CD8-positive, alpha-beta memory T cell (primary cell): ENCODE measurements at regions of chr15 and their contacts with region 1.

Region 1: GRCh38 chr15:92077353-92078085 is 224.0 kb downstream of the SLCO3A1 start:
- DNase-seq: peak; percentile 21 to 67 (median 28)
- H3K4me3 ChIP-seq: no peak overlapping the region
- H3K4me3 Mint-ChIP-seq: no peak overlapping the region
- H3K27ac ChIP-seq: no peak overlapping the region
- H3K27ac Mint-ChIP-seq: peak overlapping the region in 2 of 8 donors; percentile 29 to 33
- H3K4me1 ChIP-seq: peaks cover 13% of the 10 kb centered on the region
- H3K4me1 Mint-ChIP-seq: peaks cover 32 to 49% (median 40%) of the 10 kb centered on the region in 3 donors
- H3K27me3 ChIP-seq: no peaks in the 10 kb centered on the region
- H3K27me3 Mint-ChIP-seq: no peaks in the 10 kb centered on the region

Region 2: GRCh38 chr15:92091155-92091734 is 13.7 kb after region 1 on chr15:
- CTCF ChIA-PET with region 1: interaction called, 14 read pairs
- POLR2A ChIA-PET with region 1: no interaction called
- DNase-seq: no peak
- H3K4me3 ChIP-seq: no peak overlapping the region
- H3K4me3 Mint-ChIP-seq: no peak overlapping the region
- H3K27ac ChIP-seq: no peak overlapping the region
- H3K27ac Mint-ChIP-seq: peak overlapping the region in 1 of 8 donors; percentile 11
- H3K4me1 ChIP-seq: peaks cover 17% of the 10 kb centered on the region
- H3K4me1 Mint-ChIP-seq: peaks cover 28 to 68% (median 44%) of the 10 kb centered on the region in 3 donors
- H3K27me3 ChIP-seq: no peaks in the 10 kb centered on the region
- H3K27me3 Mint-ChIP-seq: no peaks in the 10 kb centered on the region

Region 3: GRCh38 chr15:92123962-92124656 is 46.6 kb after region 1 on chr15:
- CTCF ChIA-PET with region 1: no interaction called
- POLR2A ChIA-PET with region 1: no interaction called
- DNase-seq: no peak
- H3K4me3 ChIP-seq: no peak overlapping the region
- H3K4me3 Mint-ChIP-seq: no peak overlapping the region
- H3K27ac ChIP-seq: no peak overlapping the region
- H3K27ac Mint-ChIP-seq: peak overlapping the region in 3 of 8 donors; percentile 30 to 90 (median 39)
- H3K4me1 ChIP-seq: no peaks in the 10 kb centered on the region
- H3K4me1 Mint-ChIP-seq: peaks cover 10 to 17% (median 12%) of the 10 kb centered on the region in 3 donors
- H3K27me3 ChIP-seq: no peaks in the 10 kb centered on the region
- H3K27me3 Mint-ChIP-seq: no peaks in the 10 kb centered on the region

Region 4: GRCh38 chr15:92197746-92198145 is 120.2 kb after region 1 on chr15:
- CTCF ChIA-PET with region 1: no interaction called
- POLR2A ChIA-PET with region 1: no interaction called
- DNase-seq: no peak
- H3K4me3 ChIP-seq: no peak overlapping the region
- H3K4me3 Mint-ChIP-seq: no peak overlapping the region
- H3K27ac ChIP-seq: no peak overlapping the region
- H3K27ac Mint-ChIP-seq: no peak overlapping the region
- H3K4me1 ChIP-seq: no peaks in the 10 kb centered on the region
- H3K4me1 Mint-ChIP-seq: no peaks in the 10 kb centered on the region
- H3K27me3 ChIP-seq: no peaks in the 10 kb centered on the region
- H3K27me3 Mint-ChIP-seq: peaks cover 0 to 8% of the 10 kb centered on the region in 2 donors

Region 5: GRCh38 chr15:92681141-92681631 is 603.7 kb after region 1 on chr15:
- CTCF ChIA-PET with region 1: no interaction called
- POLR2A ChIA-PET with region 1: no interaction called
- DNase-seq: no peak
- H3K4me3 ChIP-seq: no peak overlapping the region
- H3K4me3 Mint-ChIP-seq: no peak overlapping the region
- H3K27ac ChIP-seq: no peak overlapping the region
- H3K27ac Mint-ChIP-seq: no peak overlapping the region
- H3K4me1 ChIP-seq: no peaks in the 10 kb centered on the region
- H3K4me1 Mint-ChIP-seq: no peaks in the 10 kb centered on the region
- H3K27me3 ChIP-seq: no peaks in the 10 kb centered on the region
- H3K27me3 Mint-ChIP-seq: peaks cover 5 to 49% of the 10 kb centered on the region in 2 donors